Endothelial cell of umbilical vein (primary cell): ENCODE measurements at regions of chr11 and their contacts with region 1.

Region 1: DNA sequence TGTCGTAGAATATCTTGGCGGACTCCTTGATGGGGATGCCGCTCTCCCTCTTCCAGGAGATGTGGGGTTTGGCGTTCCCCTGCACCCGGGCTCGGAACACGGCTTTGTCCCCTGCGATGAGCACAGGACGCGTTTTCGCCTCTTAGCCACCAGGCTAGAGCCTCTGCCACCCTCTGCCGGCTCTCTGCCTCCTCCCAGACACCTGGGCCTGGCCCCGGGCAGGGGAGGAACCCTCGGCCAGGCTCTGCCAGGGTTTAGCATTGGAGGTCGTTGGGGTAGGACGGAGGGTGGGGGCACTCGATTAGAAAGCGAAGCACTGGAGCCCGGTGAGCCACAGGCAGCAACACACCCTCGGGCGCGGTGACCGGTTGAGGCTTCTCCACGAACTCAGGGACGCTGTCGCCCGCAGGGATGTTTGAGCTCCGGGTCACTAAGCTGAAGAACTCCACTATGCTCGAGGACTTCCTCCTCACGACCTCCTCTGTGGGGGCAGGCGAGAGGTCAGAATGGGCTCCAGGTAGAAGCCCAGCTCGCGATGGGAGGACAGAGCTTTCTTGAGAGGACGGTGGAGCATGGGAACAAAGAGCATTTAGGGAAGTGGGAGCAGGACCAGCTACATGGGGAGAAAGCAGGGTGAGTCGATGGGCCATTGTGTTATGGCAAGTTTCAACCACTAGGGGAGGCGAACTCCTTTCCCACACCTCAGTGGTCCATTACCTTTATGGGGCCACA is 4.3 kb downstream of the IGSF22 start:
- DNase-seq: peak; percentile 51
- H3K4me3 ChIP-seq: peak overlapping the region; percentile 40 to 61 (median 60)
- H3K27ac ChIP-seq: no peak overlapping the region
- H3K4me1 ChIP-seq: peaks cover 7% of the 10 kb centered on the region
- H3K27me3 ChIP-seq: peaks cover 0 to 3% of the 10 kb centered on the region in 2 experiments
- CTCF ChIP-seq: peak; percentile 73 to 82
- POLR2A ChIP-seq: no peak

Region 2: DNA sequence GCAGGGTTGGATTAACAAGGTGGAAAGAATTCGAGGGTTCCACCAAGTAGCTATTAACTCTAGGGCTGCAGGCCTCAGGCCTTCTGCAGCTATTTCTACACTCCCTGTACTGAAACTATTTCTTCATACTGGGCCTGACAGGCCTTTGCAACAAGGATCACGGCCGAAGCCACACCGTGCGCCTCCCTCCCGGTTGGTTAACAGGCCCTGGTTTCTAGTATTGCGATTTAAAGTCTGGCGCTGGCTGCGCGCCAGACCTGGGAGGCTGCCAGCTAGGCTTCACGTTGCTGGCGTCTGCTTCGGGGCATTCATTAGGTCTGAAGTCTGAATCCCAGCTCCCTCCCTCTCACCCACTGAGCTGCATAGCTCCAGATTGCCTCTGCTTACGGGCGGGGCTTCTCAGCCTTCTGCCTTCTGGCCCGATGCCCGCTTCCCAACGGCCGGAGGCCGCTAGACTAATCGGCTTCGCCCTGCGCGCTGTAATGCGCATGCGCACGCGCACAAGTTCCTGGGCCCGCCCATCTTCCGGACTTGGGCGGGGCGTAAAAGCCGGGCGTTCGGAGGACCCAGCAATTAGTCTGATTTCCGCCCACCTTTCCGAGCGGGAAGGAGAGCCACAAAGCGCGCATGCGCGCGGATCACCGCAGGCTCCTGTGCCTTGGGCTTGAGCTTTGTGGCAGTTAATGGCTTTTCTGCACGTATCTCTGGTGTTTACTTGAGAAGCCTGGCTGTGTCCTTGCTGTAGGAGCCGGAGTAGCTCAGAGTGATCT is 325.8 kb before region 1 on chr11:
- CTCF ChIA-PET with region 1: no interaction called
- POLR2A ChIA-PET with region 1: no interaction called
- dilution Hi-C with region 1: no loop called
- intact Hi-C with region 1: loop called (anchors 1 kb)
- DNase-seq: peak; percentile 100
- H3K4me3 ChIP-seq: peak overlapping the region; percentile 42 to 80 (median 65)
- H3K27ac ChIP-seq: peak overlapping the region; percentile 56
- H3K4me1 ChIP-seq: peaks cover 18% of the 10 kb centered on the region
- H3K27me3 ChIP-seq: no peaks in the 10 kb centered on the region
- CTCF ChIP-seq: no peak
- POLR2A ChIP-seq: peak; percentile 83

Region 3: GRCh38 chr11:18698341-18699268 is 23.1 kb before region 1 on chr11 and contains the start of gene TMEM86A:
- CTCF ChIA-PET with region 1: interaction called, 20 read pairs
- POLR2A ChIA-PET with region 1: no interaction called
- dilution Hi-C with region 1: no loop called
- intact Hi-C with region 1: loop called (anchors 1 kb)
- DNase-seq: peak; percentile 88
- H3K4me3 ChIP-seq: peak within 1 kb of the TSS; percentile 30 to 59 (median 48)
- H3K27ac ChIP-seq: no peak within 1 kb of the TSS
- H3K4me1 ChIP-seq: peaks cover 11% of the 10 kb centered on the region
- H3K27me3 ChIP-seq: no peaks in the 10 kb centered on the region
- CTCF ChIP-seq: no peak
- POLR2A ChIP-seq: peak; percentile 32
- total RNA-seq, gene TMEM86A: 2.5 and 2.6 TPM in 2 replicates

Region 4: GRCh38 chr11:18731949-18732821 is 10.5 kb after region 1 on chr11:
- CTCF ChIA-PET with region 1: interaction called, 43 read pairs
- POLR2A ChIA-PET with region 1: no interaction called
- dilution Hi-C with region 1: no loop called
- intact Hi-C with region 1: no loop called
- DNase-seq: peak; percentile 60
- H3K4me3 ChIP-seq: no peak overlapping the region
- H3K27ac ChIP-seq: no peak overlapping the region
- H3K4me1 ChIP-seq: no peaks in the 10 kb centered on the region
- H3K27me3 ChIP-seq: peaks cover 0 to 3% of the 10 kb centered on the region in 2 experiments
- CTCF ChIP-seq: peak; percentile 92 to 93
- POLR2A ChIP-seq: no peak

Region 5: DNA sequence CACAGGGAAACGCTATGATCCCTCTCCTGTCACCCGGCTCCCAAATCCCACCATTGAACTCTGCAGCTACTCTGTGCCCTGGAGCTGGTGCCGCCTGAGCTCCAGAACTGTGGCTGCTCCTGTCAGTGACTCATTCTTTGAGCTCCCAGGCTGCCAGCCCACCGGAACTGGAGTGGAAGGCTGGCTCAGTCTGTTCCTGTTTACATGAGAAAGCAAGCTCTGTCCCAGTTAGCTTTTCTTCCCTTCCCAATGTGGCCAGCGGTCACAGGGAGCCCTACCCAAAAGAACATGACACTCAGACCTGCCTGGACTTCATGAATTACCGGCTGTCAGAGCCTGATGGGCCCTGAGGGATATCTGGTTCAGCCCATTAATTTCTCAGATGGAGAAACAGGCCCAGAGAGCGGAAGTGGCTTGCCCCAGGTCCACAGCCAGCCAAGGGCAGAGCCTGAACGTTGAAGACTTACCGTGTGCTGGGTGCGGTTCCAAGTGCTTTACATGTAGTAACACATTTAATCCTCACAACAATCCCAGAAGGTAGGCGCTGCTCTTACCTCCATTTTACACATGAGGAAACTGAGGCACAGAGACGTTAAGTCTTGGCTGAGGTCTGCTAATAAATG is 28.1 kb after region 1 on chr11:
- CTCF ChIA-PET with region 1: interaction called, 29 read pairs
- POLR2A ChIA-PET with region 1: no interaction called
- dilution Hi-C with region 1: no loop called
- intact Hi-C with region 1: no loop called
- DNase-seq: peak; percentile 84
- H3K4me3 ChIP-seq: no peak overlapping the region
- H3K27ac ChIP-seq: peak overlapping the region; percentile 55
- H3K4me1 ChIP-seq: peaks cover 12% of the 10 kb centered on the region
- H3K27me3 ChIP-seq: no peaks in the 10 kb centered on the region
- CTCF ChIP-seq: no peak
- POLR2A ChIP-seq: peak; percentile 28

Region 6: DNA sequence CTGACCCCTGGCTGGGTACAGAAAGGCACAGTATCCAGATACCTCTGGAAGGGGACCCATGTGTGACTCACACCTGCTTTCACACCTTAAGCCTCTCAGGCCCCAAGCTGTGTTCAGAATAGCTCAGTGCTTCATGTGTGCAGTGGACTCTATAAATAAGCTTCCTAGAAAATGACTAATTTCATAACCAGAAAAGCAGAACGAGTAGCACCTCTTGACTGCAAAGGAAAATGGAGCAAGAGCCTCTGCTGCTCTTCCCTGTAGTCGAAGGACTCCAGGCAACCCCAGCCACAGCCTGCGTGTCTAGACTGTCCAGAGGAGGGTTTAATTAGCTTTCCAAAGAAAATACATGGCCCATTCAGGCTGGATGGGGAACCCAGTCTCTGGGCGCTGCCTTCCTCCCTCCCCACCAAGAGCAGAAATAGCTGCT is 46.8 kb after region 1 on chr11:
- CTCF ChIA-PET with region 1: interaction called, 26 read pairs
- POLR2A ChIA-PET with region 1: no interaction called
- dilution Hi-C with region 1: no loop called
- intact Hi-C with region 1: loop called (anchors 1 kb)
- DNase-seq: no peak
- H3K4me3 ChIP-seq: no peak overlapping the region
- H3K27ac ChIP-seq: no peak overlapping the region
- H3K4me1 ChIP-seq: peaks cover 11% of the 10 kb centered on the region
- H3K27me3 ChIP-seq: peaks cover 0 to 3% of the 10 kb centered on the region in 2 experiments
- CTCF ChIP-seq: no peak
- POLR2A ChIP-seq: no peak